ENCODE measurements at regions of chr15 and their contacts with region 1.

Region 1: GRCh38 chr15:31440754-31441311 is 114.2 kb downstream of the KLF13 start:
- DNase-seq: no peak
- H3K4me3 ChIP-seq: no peak overlapping the region
- H3K27ac ChIP-seq: no peak overlapping the region
- H3K4me1 ChIP-seq: no peaks in the 10 kb centered on the region
- H3K27me3 ChIP-seq: no peaks in the 10 kb centered on the region
- CTCF ChIP-seq: no peak

Region 2: DNA sequence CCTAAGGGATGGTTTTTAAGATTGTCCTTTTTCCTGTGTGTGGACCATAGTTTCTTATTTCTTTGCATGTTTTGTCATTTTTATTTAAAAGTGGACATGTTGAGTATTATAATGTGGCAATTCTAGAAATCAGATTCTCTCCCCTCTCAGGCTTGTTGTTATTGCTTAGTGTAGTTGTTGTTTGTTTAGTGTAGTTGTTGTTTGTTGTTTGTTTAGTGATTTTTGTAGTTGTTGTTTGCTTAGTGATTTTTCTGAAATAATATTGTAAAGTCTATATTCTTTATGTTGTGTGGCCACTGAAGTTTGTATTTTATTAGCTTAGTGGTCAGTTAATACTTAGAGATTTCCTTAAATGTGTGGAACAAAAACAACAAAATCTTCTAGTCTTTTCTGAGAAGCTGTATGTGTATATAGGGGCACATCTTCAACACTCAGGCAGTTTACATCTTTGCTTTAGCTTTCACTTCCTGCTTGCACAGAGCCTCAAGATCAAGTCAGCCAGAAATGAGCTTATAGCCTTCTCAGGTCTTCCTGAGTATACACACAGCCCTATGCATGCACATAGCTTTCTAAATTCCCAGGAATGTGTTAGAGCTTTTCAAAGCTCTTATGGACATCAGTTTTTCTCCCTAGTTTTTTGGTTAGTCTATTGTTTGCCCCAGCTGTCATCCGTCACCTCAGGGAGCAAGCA is 427.1 kb before region 1 on chr15:
- CTCF ChIA-PET with region 1: no interaction called
- POLR2A ChIA-PET with region 1: no interaction called
- intact Hi-C with region 1: no loop called
- DNase-seq: no peak
- H3K4me3 ChIP-seq: no peak overlapping the region
- H3K27ac ChIP-seq: no peak overlapping the region
- H3K4me1 ChIP-seq: no peaks in the 10 kb centered on the region
- H3K27me3 ChIP-seq: 0 out of 2 replicates have a peak, but pooled peaks cover 2% of the 10 kb centered on the region
- CTCF ChIP-seq: no peak

Region 3: DNA sequence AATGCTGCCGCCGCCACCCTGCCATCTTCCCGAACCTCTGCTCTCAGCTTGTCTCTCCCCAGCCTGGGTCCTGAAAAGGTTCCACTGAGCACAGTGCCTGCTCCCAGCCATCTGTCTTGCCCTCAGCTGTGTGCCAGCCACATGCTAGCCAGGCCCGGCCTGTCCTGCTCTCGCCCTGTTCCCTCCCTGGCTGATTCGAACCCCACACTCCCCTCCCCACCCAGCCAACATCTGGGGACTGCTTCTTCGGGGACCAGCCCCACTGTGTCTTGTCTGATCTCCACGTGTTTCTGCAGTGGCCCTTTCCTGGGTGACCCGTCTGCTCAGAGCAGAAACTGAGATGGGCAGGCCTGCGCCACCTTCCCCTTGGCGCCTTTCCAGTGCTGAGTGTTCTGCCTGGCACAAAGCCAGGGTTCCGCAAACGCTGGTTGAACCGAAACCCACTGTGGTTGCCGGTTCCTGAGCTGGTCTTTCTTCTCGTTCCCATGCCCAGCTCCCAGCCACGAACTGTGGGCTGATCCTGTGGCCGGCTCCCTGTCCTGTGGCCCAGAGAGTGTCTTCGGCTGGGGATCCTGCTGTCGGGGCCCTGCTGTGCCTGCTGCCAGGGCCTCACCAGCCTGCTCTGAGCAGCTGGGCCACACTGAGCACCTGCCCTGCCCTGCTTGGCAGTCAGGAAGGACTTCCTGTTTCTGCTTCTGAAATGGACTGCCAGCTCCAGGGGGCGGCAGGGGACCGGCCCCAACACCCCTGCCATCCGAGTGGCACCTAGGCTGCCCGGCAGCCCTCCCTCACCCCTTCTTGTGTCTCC is 176.9 kb before region 1 on chr15:
- CTCF ChIA-PET with region 1: interaction called, 15 read pairs
- POLR2A ChIA-PET with region 1: no interaction called
- intact Hi-C with region 1: no loop called
- DNase-seq: no peak
- H3K4me3 ChIP-seq: no peak overlapping the region
- H3K27ac ChIP-seq: no peak overlapping the region
- H3K4me1 ChIP-seq: no peaks in the 10 kb centered on the region
- H3K27me3 ChIP-seq: peaks cover 24% of the 10 kb centered on the region; the same call in 1 of the 2 replicates
- CTCF ChIP-seq: no peak

Region 4: DNA sequence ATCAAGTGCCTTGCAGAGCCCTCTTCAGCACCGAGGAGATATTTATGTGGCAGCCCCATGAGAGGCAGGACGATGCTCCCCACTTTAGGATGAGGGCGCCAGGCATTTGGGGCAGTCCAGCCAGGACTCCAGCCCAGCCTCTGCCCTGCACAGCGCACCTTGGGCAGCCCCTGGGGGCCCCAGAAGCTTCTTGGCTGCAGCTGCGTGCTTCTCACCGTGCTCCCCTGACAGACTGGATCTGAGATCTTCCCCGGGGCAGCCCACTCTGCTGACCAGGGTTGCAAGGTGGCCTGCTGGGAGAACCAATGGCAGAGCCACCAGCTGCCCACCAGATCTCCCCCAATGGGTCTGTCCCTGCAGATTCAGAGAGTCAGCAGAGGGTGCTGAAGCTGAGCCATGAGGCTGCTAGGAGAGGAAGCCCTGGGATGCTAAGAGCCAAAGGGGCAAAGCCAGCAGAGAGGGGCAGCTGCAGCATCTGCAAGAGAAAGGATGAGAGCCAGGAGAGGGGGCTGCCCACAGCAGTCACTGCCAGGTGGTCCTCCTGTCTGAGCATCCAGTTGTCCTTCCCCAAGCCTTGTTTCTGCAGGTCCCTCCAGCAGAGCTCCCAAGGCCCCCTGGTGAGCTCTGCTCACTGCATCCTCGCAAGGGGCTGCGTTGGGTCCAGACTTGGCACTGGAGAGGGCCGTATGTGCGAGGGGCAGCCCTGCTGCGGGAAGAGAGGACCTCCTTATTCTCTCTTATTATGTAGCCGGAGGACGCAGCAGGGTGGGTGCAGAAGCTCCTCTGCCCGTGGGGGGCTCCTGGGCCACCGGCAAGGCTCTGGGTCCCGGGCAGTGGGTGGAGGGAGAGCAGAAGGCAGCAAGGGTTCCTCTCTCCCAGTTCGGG is 128.9 kb before region 1 on chr15:
- CTCF ChIA-PET with region 1: no interaction called
- POLR2A ChIA-PET with region 1: no interaction called
- intact Hi-C with region 1: no loop called
- DNase-seq: no peak
- H3K4me3 ChIP-seq: no peak overlapping the region
- H3K27ac ChIP-seq: no peak overlapping the region
- H3K4me1 ChIP-seq: no peaks in the 10 kb centered on the region
- H3K27me3 ChIP-seq: peaks cover 34% of the 10 kb centered on the region
- CTCF ChIP-seq: no peak

Region 5: DNA sequence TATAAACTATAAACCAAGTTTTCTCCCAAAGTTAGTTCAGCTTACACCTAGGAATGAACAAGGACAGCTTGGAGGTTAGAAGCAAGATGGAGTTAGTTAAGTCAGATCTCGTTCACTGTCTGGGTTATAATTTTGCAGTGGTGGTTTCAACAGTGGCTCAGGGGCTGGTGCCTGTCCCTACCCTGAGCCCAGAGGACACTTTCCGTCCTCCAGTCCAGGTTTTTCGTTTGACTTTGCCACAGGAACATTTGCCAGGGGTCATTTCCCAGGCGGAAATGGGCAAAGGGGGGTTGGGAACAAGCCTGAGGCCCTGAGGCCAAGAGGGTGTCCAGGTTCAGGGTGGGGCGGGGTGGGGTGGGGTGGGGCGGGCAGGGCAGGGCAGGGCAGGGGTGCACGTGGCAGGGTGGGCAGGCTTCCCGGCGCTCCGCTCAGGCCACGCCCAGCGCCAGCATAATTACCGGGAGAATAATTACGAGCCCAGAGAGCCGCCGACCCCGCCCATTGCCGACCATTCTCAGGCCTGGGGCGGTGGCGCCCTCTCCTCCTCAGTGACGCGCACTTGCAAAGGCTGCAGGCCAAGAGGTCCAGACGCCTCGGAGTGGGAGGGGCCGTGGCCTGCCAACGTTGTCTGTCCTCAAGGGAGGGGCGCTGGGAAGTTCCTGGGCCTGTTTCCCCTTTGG is 43.8 kb before region 1 on chr15:
- CTCF ChIA-PET with region 1: no interaction called
- POLR2A ChIA-PET with region 1: no interaction called
- intact Hi-C with region 1: no loop called
- DNase-seq: peak in 1 of 2 experiments; percentile 40
- H3K4me3 ChIP-seq: no peak overlapping the region
- H3K27ac ChIP-seq: no peak overlapping the region
- H3K4me1 ChIP-seq: no peaks in the 10 kb centered on the region
- H3K27me3 ChIP-seq: peaks cover 26% of the 10 kb centered on the region; the same call in 1 of the 2 replicates
- CTCF ChIP-seq: no peak

Measured in PC-9 (cell line).